ENCODE measurements at regions of chr4 and their contacts with region 1.

Region 1: GRCh38 chr4:145216535-145216934 is 36.1 kb upstream of the OTUD4 start:
- DNase-seq: peak; percentile 48
- H3K4me3 Mint-ChIP-seq: no peak overlapping the region
- H3K27ac Mint-ChIP-seq: no peak overlapping the region
- H3K4me1 Mint-ChIP-seq: no peaks in the 10 kb centered on the region
- H3K27me3 Mint-ChIP-seq: no peaks in the 10 kb centered on the region
- CTCF ChIP-seq: peak; percentile 61

Region 2: GRCh38 chr4:144955104-144955503 is 261.4 kb before region 1 on chr4:
- CTCF ChIA-PET with region 1: no interaction called
- POLR2A ChIA-PET with region 1: no interaction called
- intact Hi-C with region 1: no loop called
- DNase-seq: no peak
- H3K4me3 Mint-ChIP-seq: no peak overlapping the region
- H3K27ac Mint-ChIP-seq: no peak overlapping the region
- H3K4me1 Mint-ChIP-seq: no peaks in the 10 kb centered on the region
- H3K27me3 Mint-ChIP-seq: no peaks in the 10 kb centered on the region
- CTCF ChIP-seq: no peak

Region 3: GRCh38 chr4:145199051-145199716 is 17.4 kb before region 1 on chr4:
- CTCF ChIA-PET with region 1: interaction called, 10 read pairs
- POLR2A ChIA-PET with region 1: no interaction called
- intact Hi-C with region 1: no loop called
- DNase-seq: no peak
- H3K4me3 Mint-ChIP-seq: no peak overlapping the region
- H3K27ac Mint-ChIP-seq: no peak overlapping the region
- H3K4me1 Mint-ChIP-seq: no peaks in the 10 kb centered on the region
- H3K27me3 Mint-ChIP-seq: no peaks in the 10 kb centered on the region
- CTCF ChIP-seq: no peak

Region 4: GRCh38 chr4:145557720-145558119 is 341.2 kb after region 1 on chr4:
- CTCF ChIA-PET with region 1: interaction called, 8 read pairs
- POLR2A ChIA-PET with region 1: no interaction called
- intact Hi-C with region 1: loop called (anchors 5 kb)
- DNase-seq: peak; percentile 72
- H3K4me3 Mint-ChIP-seq: no peak overlapping the region
- H3K27ac Mint-ChIP-seq: peak overlapping the region; percentile 37
- H3K4me1 Mint-ChIP-seq: no peaks in the 10 kb centered on the region
- H3K27me3 Mint-ChIP-seq: no peaks in the 10 kb centered on the region
- CTCF ChIP-seq: peak; percentile 90

Region 5: DNA sequence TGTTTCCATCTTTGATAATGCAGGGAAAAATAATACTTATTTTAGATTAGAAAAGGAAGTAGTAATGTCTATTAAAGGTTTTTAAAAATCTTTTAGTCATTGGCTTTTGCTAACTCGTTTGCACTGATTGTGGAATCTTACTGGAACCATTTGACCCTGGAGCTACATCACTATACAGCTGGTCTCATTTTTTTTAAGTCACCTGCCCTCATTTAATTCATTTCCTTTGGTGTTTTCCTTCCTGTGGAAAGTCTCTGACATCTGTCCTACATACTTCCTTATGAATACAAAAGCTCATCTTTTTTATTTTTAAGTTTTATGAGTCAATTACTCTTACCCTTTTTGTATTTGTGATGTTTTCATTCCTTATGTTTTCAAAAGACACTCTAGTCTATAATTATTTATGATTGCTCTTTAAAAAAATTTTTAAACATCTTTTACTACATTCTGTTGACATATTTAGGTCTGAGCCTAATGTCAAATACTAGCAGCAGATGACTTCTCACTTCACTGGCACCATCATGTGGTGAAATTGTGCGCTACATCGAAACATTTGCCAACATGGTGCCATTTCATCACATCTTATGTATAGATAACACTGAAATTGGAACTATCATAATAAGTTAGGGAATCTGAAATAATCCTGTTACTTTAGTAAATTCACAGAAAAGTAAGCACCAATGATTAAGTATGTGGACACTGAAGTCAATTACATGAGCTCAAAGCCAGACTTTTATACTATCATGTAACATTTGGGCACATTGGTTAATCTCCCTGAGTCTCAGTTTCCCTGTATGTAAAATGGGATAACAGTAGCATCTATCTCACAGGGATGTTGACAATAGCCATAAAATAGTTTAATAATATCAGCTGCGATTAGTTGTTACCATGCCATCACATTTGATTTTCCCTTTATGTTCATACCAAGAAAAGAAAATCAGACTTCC is 393.2 kb after region 1 on chr4:
- CTCF ChIA-PET with region 1: interaction called, 78 read pairs
- POLR2A ChIA-PET with region 1: no interaction called
- intact Hi-C with region 1: loop called (anchors 1 kb)
- DNase-seq: peak; percentile 83
- H3K4me3 Mint-ChIP-seq: no peak overlapping the region
- H3K27ac Mint-ChIP-seq: no peak overlapping the region
- H3K4me1 Mint-ChIP-seq: no peaks in the 10 kb centered on the region
- H3K27me3 Mint-ChIP-seq: no peaks in the 10 kb centered on the region
- CTCF ChIP-seq: peak; percentile 77

Region 6: GRCh38 chr4:146916479-146917076 is 1700.0 kb after region 1 on chr4:
- CTCF ChIA-PET with region 1: no interaction called
- POLR2A ChIA-PET with region 1: no interaction called
- intact Hi-C with region 1: loop called (anchors 5 kb)
- DNase-seq: peak; percentile 59
- H3K4me3 Mint-ChIP-seq: no peak overlapping the region
- H3K27ac Mint-ChIP-seq: no peak overlapping the region
- H3K4me1 Mint-ChIP-seq: peaks cover 6% of the 10 kb centered on the region
- H3K27me3 Mint-ChIP-seq: peaks cover 58% of the 10 kb centered on the region
- CTCF ChIP-seq: peak; percentile 89

Measured in MCF 10A (cell line).